Activated CD4-positive, alpha-beta T cell treated with anti-CD3 and anti-CD28 coated beads for 36 hours (primary cell): ENCODE measurements at regions of chr7 and their contacts with region 1.

Region 1: GRCh38 chr7:106346678-106347217 is 62.0 kb upstream of the NAMPT start:
- DNase-seq: peak; percentile 65
- ATAC-seq: peak; percentile 73
- H3K4me3 Mint-ChIP-seq: peak overlapping the region; percentile 66
- H3K27ac Mint-ChIP-seq: peak overlapping the region; percentile 100
- H3K4me1 Mint-ChIP-seq: peaks cover 54% of the 10 kb centered on the region
- H3K27me3 Mint-ChIP-seq: peaks cover 12% of the 10 kb centered on the region

Region 2: GRCh38 chr7:106260136-106260561 is 86.6 kb before region 1 on chr7:
- CTCF ChIA-PET with region 1: no interaction called
- POLR2A ChIA-PET with region 1: no interaction called
- intact Hi-C with region 1: loop called in 1 of 2 experiments (anchors 1 kb)
- DNase-seq: no peak
- ATAC-seq: peak; percentile 21
- H3K4me3 Mint-ChIP-seq: no peak overlapping the region
- H3K27ac Mint-ChIP-seq: peak overlapping the region; percentile 83
- H3K4me1 Mint-ChIP-seq: peaks cover 81% of the 10 kb centered on the region
- H3K27me3 Mint-ChIP-seq: no peaks in the 10 kb centered on the region

Region 3: GRCh38 chr7:106367018-106367420 is 20.3 kb after region 1 on chr7:
- CTCF ChIA-PET with region 1: interaction called, 3 read pairs
- POLR2A ChIA-PET with region 1: interaction called, 3 read pairs
- intact Hi-C with region 1: loop called (anchors 1 to 2 kb)
- DNase-seq: no peak
- ATAC-seq: peak; percentile 40
- H3K4me3 Mint-ChIP-seq: no peak overlapping the region
- H3K27ac Mint-ChIP-seq: no peak overlapping the region
- H3K4me1 Mint-ChIP-seq: peaks cover 38% of the 10 kb centered on the region
- H3K27me3 Mint-ChIP-seq: peaks cover 20% of the 10 kb centered on the region

Region 4: GRCh38 chr7:106425017-106425719 is 78.4 kb after region 1 on chr7:
- CTCF ChIA-PET with region 1: interaction called, 14 read pairs
- POLR2A ChIA-PET with region 1: interaction called, 30 read pairs
- intact Hi-C with region 1: loop called (anchors 1 kb)
- DNase-seq: peak; percentile 89
- ATAC-seq: peak; percentile 79
- H3K4me3 Mint-ChIP-seq: peak overlapping the region; percentile 70
- H3K27ac Mint-ChIP-seq: peak overlapping the region; percentile 99
- H3K4me1 Mint-ChIP-seq: peaks cover 88% of the 10 kb centered on the region
- H3K27me3 Mint-ChIP-seq: peaks cover 2% of the 10 kb centered on the region

Region 5: GRCh38 chr7:106717955-106718871 is 371.5 kb after region 1 on chr7:
- CTCF ChIA-PET with region 1: no interaction called
- POLR2A ChIA-PET with region 1: no interaction called
- intact Hi-C with region 1: loop called (anchors 1 to 10 kb)
- DNase-seq: peak; percentile 90
- ATAC-seq: peak; percentile 98
- H3K4me3 Mint-ChIP-seq: no peak overlapping the region
- H3K27ac Mint-ChIP-seq: no peak overlapping the region
- H3K4me1 Mint-ChIP-seq: peaks cover 13% of the 10 kb centered on the region
- H3K27me3 Mint-ChIP-seq: no peaks in the 10 kb centered on the region